Endothelial cell of umbilical vein (primary cell): ENCODE measurements at regions of chr12 and their contacts with region 1.

Region 1: DNA sequence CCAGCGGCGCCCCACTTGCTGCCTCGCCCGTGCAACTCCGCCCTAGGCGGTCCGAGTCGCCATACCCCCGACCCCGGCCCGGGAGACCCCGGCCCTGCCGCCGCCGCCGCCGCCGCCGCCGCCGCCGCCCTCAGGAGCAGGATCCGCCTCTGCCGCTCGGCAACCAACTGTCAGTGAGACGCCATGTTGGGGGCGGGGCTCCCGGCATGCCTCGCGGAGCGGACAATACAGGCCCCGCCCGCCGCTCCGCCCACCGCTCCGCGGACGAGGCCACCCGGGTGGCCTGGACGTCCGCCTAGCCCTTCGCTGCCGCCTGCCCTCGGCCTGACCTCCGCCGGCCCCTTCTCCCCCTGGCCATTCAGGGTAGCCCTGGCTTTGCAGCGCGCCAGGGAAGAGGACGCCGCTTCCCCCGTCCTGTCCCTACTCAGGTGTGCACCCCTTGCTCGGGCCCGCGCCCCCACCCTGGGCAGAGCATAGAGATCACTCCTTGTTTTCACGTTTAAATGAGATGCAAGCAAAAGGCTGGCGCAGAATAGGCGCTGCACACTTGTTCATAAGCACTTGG is at the start of gene HECTD4:
- DNase-seq: peak; percentile 84
- H3K4me3 ChIP-seq: peak within 1 kb of the TSS; percentile 71 to 95 (median 72)
- H3K27ac ChIP-seq: peak within 1 kb of the TSS; percentile 35
- H3K4me1 ChIP-seq: peaks cover 12% of the 10 kb centered on the region
- H3K27me3 ChIP-seq: no peaks in the 10 kb centered on the region
- CTCF ChIP-seq: no peak
- POLR2A ChIP-seq: peak; percentile 93
- total RNA-seq, gene HECTD4: 38.8 and 47.7 TPM in 2 replicates

Region 2: GRCh38 chr12:112108201-112109079 is 273.9 kb before region 1 on chr12 and contains the start of gene NAA25:
- CTCF ChIA-PET with region 1: no interaction called
- POLR2A ChIA-PET with region 1: no interaction called
- dilution Hi-C with region 1: no loop called
- intact Hi-C with region 1: loop called (anchors 5 kb)
- DNase-seq: peak; percentile 89
- H3K4me3 ChIP-seq: peak within 1 kb of the TSS; percentile 81 to 96 (median 95)
- H3K27ac ChIP-seq: peak within 1 kb of the TSS; percentile 74
- H3K4me1 ChIP-seq: peaks cover 10% of the 10 kb centered on the region
- H3K27me3 ChIP-seq: no peaks in the 10 kb centered on the region
- CTCF ChIP-seq: no peak
- POLR2A ChIP-seq: peak; percentile 36
- total RNA-seq, gene NAA25: 25.5 and 26.6 TPM in 2 replicates

Region 3: GRCh38 chr12:112236386-112236785 is 145.9 kb before region 1 on chr12:
- CTCF ChIA-PET with region 1: interaction called, 12 read pairs
- POLR2A ChIA-PET with region 1: no interaction called
- dilution Hi-C with region 1: no loop called
- intact Hi-C with region 1: no loop called
- DNase-seq: no peak
- H3K4me3 ChIP-seq: no peak overlapping the region
- H3K27ac ChIP-seq: no peak overlapping the region
- H3K4me1 ChIP-seq: no peaks in the 10 kb centered on the region
- H3K27me3 ChIP-seq: no peaks in the 10 kb centered on the region
- CTCF ChIP-seq: no peak
- POLR2A ChIP-seq: no peak

Region 4: DNA sequence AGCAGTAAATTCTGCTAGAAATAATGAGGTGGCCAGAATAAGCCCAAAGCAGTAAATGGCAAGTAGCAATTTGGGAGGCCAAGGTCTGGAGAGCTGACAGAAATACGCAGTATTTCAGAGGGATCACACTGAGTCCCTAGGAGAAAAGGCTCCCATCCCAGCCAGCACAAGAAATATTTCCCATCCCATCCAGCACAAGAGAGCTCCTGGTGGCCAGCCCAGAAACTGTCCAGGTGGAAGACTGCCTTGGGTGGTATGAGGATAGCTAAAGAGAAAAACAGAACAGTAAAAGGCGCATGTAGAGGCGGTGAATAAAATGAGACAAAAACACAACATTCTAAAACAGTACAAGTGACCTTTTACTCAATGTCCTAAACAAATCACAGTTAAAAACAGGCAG is 120.8 kb before region 1 on chr12:
- CTCF ChIA-PET with region 1: interaction called, 13 read pairs
- POLR2A ChIA-PET with region 1: no interaction called
- dilution Hi-C with region 1: no loop called
- intact Hi-C with region 1: no loop called
- DNase-seq: no peak
- H3K4me3 ChIP-seq: no peak overlapping the region
- H3K27ac ChIP-seq: no peak overlapping the region
- H3K4me1 ChIP-seq: no peaks in the 10 kb centered on the region
- H3K27me3 ChIP-seq: no peaks in the 10 kb centered on the region
- CTCF ChIP-seq: peak; percentile 11 to 19
- POLR2A ChIP-seq: no peak

Region 5: DNA sequence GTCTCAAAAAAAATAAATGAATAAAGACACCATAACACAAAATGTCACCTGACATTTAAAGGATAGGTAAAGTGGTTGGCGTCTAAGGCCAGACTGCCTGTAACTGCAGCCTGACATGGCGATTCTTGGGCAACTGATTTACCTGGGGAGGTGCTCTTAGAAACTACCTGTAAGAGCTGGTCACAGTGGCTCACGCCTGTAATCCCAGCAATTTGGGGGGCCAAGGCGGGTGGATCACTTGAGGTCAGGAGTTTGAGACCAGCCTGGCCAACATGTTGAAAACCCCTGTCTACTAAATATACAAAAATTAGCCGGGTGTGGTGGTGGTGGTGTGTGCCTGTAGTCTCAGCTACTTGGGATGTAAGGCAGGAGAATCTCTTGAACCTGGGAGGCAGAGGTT is 18.7 kb after region 1 on chr12:
- CTCF ChIA-PET with region 1: interaction called, 10 read pairs
- POLR2A ChIA-PET with region 1: no interaction called
- dilution Hi-C with region 1: no loop called
- intact Hi-C with region 1: no loop called
- DNase-seq: no peak
- H3K4me3 ChIP-seq: no peak overlapping the region
- H3K27ac ChIP-seq: no peak overlapping the region
- H3K4me1 ChIP-seq: no peaks in the 10 kb centered on the region
- H3K27me3 ChIP-seq: no peaks in the 10 kb centered on the region
- CTCF ChIP-seq: no peak
- POLR2A ChIP-seq: no peak

Region 6: GRCh38 chr12:112450725-112451124 is 68.4 kb after region 1 on chr12:
- CTCF ChIA-PET with region 1: no interaction called
- POLR2A ChIA-PET with region 1: interaction called, 12 read pairs
- dilution Hi-C with region 1: no loop called
- intact Hi-C with region 1: no loop called
- DNase-seq: no peak
- H3K4me3 ChIP-seq: no peak overlapping the region
- H3K27ac ChIP-seq: no peak overlapping the region
- H3K4me1 ChIP-seq: peaks cover 5% of the 10 kb centered on the region
- H3K27me3 ChIP-seq: no peaks in the 10 kb centered on the region
- CTCF ChIP-seq: no peak
- POLR2A ChIP-seq: no peak